OCI-LY7 (cell line): ENCODE measurements at regions of chrX and their contacts with region 1.

Region 1: DNA sequence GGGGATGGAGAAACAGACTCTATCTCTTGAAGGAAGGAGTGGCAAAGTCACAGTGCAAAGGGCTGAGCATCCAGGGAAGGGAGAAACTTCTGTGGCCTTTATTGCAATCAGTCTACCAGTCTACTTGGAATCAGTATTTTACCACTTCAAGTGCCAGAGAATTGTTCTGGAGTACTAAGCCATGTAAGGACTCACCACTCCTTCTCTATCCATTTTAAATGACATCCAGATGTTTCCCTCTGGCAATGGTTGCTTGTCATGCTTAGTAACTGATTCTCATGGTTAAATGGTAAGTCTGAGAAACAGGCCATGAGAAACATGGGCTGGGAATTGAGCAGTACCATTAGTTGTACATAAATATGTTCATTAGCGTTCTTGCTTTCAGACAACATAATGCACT is 21.1 kb upstream of the SMIM10 start:
- DNase-seq: no peak
- H3K4me3 ChIP-seq: no peak overlapping the region
- H3K27ac ChIP-seq: no peak overlapping the region
- H3K4me1 ChIP-seq: no peaks in the 10 kb centered on the region
- CTCF ChIP-seq: no peak

Region 2: GRCh38 chrX:134631426-134632346 is 338.0 kb before region 1 on chrX:
- CTCF ChIA-PET with region 1: no interaction called
- POLR2A ChIA-PET with region 1: no interaction called
- intact Hi-C with region 1: no loop called
- DNase-seq: no peak
- H3K4me3 ChIP-seq: no peak overlapping the region
- H3K27ac ChIP-seq: no peak overlapping the region
- H3K4me1 ChIP-seq: no peaks in the 10 kb centered on the region
- CTCF ChIP-seq: no peak

Region 3: DNA sequence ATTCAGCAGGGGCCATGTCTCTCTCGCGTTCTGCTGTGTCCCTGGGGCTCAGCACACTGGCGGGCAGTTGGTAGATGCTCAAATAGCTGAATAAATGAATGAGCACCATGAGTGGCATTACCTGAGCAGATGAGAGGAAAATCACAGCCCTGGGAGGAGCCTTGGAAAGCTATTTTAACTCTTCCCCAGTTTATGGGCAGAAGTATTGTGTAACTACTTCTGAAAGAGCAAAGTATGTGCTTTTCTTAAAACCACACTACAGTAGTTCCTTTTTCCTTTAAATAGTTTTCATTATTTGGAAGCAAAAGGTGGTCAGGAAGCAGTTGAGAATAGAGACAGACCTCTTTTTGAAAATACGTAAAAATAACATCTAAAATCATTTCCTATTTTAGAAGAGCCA is 308.4 kb before region 1 on chrX:
- CTCF ChIA-PET with region 1: no interaction called
- POLR2A ChIA-PET with region 1: no interaction called
- intact Hi-C with region 1: no loop called
- DNase-seq: no peak
- H3K4me3 ChIP-seq: no peak overlapping the region
- H3K27ac ChIP-seq: no peak overlapping the region
- H3K4me1 ChIP-seq: no peaks in the 10 kb centered on the region
- CTCF ChIP-seq: no peak

Region 4: DNA sequence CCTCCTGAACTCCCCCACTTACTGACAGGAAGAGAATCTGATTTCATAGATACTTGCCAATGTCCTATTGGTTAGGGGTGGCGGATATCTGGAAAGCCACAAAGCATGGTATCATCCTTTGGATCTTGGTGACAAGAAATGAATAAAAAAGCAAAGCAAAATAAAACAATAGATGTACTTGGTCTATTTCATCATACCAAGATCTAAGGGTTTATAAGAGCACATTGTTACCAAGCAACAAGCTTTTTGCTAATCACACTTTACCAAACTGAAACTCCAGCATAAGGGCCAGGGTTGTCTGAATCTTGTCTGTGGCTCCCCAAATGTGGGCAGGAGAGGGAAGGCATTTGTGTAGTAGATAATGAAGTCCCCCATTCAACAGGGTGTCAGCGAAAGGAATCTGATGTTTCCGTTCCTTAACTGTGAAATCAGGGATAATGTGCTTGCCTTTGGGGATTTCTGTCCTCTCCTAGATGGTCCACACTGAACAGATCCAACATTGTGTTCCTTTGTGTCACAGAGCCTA is 103.9 kb before region 1 on chrX:
- CTCF ChIA-PET with region 1: no interaction called
- POLR2A ChIA-PET with region 1: no interaction called
- intact Hi-C with region 1: no loop called
- DNase-seq: no peak
- H3K4me3 ChIP-seq: no peak overlapping the region
- H3K27ac ChIP-seq: no peak overlapping the region
- H3K4me1 ChIP-seq: no peaks in the 10 kb centered on the region
- CTCF ChIP-seq: no peak

Region 5: GRCh38 chrX:134886201-134886600 is 83.5 kb before region 1 on chrX:
- CTCF ChIA-PET with region 1: no interaction called
- POLR2A ChIA-PET with region 1: no interaction called
- intact Hi-C with region 1: no loop called
- DNase-seq: no peak
- H3K4me3 ChIP-seq: no peak overlapping the region
- H3K27ac ChIP-seq: no peak overlapping the region
- H3K4me1 ChIP-seq: no peaks in the 10 kb centered on the region
- CTCF ChIP-seq: no peak

Region 6: GRCh38 chrX:134999469-134999868 is 29.7 kb after region 1 on chrX:
- CTCF ChIA-PET with region 1: no interaction called
- POLR2A ChIA-PET with region 1: interaction called, 3 read pairs
- intact Hi-C with region 1: loop called (anchors 1 kb)
- DNase-seq: peak; percentile 15
- H3K4me3 ChIP-seq: no peak overlapping the region
- H3K27ac ChIP-seq: no peak overlapping the region
- H3K4me1 ChIP-seq: no peaks in the 10 kb centered on the region
- CTCF ChIP-seq: peak; percentile 65

Region 7: DNA sequence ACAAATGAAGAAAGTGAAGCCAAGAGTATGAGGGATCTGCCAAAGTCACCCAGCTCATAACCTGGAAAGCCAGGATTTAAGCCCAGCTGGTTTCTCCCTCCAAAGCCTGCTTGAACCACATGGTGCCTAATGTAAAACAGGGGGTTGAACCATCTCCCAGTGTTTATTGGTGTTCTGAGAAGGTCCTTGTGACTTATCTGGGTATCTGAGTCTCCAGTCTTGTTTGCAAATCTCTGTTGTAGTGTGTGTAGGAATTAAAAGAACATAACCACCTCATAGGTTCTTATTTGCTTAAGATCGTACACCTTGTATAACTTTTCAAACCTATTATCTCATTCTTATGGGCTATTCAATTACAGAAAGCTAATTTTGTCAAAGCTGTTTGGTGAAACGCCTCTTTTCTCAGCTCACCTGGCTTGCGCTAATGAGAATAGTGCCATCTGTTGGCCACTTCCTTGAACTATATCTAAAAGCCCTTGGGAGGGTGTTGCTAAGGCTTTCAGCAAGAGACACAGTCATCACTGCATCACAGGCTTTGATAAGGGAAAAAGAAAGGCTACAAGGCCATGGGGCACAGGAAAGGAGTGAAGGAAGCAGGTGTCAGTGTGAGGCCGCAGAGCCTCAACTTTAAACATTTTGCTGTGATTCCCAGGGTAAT is 116.6 kb after region 1 on chrX:
- CTCF ChIA-PET with region 1: no interaction called
- POLR2A ChIA-PET with region 1: no interaction called
- intact Hi-C with region 1: loop called (anchors 2 kb)
- DNase-seq: peak; percentile 71
- H3K4me3 ChIP-seq: no peak overlapping the region
- H3K27ac ChIP-seq: no peak overlapping the region
- H3K4me1 ChIP-seq: no peaks in the 10 kb centered on the region
- CTCF ChIP-seq: peak; percentile 77